Activated T-helper 1 cell treated with anti-CD3 and anti-CD28 coated beads, Interleukin-12 subunit alpha, Interleukin-12 subunit beta, Interleukin-2, Interleukin-4 antibody, amounts not matched to agents 30 ng/mL and 10 ng/mL and 1 ng/mL, durations not matched to agents 14 hours and 24 hours and 36 hours (primary cell): ENCODE measurements at regions of chr15 and their contacts with region 1.

Region 1: DNA sequence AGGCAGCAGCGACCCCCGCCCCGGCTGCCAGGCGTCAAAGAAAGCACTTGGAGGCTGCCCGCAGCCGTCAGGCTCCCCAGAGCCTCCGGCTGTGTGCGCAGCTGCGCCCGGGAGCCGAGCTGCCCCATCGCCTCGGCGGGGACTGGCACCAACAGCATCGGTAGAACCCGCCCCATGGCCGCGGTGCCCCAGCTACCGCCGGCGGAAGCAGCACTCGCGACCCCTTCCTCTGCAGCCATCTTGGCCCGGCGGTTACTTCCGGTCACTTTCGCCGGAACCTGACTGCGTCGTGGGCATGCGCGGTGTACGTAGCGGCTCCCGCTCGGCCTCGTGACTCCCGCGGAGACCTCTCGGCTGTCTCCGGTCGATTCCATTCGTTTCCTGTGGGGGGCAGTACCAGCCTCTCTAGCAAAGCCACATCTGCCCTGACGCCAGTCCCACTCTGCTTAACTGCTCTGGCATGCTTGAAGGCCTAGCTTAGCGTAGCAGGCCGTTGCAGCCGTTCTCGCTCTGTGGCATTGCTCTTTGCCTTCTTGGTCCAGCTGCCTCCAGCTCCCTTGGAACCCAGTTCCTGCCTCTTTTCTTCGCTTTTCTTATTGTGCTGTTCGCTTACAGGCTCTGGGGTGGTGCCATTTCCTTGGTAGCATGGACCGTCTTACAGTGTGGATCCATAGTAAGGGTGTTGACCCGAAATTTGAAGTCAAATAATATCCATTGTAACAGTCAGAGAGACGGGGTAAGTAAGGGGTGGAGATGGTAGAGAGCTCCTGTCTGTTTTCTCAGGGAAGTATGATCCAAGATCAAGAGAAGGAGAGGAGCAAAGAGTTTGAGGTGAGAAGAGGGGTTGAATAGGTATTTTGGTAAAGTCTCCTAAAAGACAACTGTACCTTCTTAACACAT is at the start of gene SPG11:
- DNase-seq: peak; percentile 94
- H3K4me3 Mint-ChIP-seq: peak within 1 kb of the TSS; percentile 95
- H3K27ac Mint-ChIP-seq: peak within 1 kb of the TSS; percentile 94
- H3K4me1 Mint-ChIP-seq: peaks cover 60% of the 10 kb centered on the region
- H3K27me3 Mint-ChIP-seq: no peaks in the 10 kb centered on the region
- total RNA-seq, gene SPG11: 65.2 and 70.4 TPM in 2 replicates

Region 2: GRCh38 chr15:44286814-44287452 is 376.7 kb before region 1 on chr15:
- intact Hi-C with region 1: no loop called
- DNase-seq: no peak
- H3K4me3 Mint-ChIP-seq: peak overlapping the region; percentile 92
- H3K27ac Mint-ChIP-seq: peak overlapping the region; percentile 100
- H3K4me1 Mint-ChIP-seq: peaks cover 44% of the 10 kb centered on the region
- H3K27me3 Mint-ChIP-seq: peaks cover 9% of the 10 kb centered on the region

Region 3: DNA sequence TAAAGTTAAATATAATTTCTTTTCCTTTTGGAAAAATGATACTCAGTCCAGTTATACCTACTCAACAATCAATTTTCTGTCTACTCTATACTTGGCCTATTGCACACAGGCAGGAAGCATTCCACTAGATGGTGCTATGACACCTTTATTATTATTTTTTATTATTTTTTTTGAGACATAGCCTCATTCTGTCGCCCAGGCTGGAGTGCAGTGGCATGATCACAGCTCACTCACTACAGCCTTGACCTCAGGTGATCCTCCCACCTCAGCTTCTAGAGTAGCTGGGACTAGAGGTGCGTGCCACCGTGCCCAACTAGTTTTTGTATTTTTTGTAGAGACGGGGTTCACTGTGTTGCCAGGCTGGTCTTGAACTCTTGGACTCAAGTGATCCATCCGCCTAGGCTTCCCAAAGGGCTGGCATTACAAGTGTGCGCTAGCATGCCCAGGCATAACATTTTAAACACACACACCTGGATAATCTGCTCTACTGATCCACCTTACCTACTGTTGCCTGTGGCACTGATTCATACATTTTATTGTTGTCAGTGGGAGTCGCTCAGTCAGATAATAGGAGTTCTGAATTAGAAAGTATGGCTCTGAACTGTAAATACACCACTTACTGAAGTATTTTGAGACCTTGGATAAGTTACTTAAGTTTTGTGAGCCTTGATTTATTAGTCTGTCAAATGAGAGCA is 70.5 kb before region 1 on chr15:
- intact Hi-C with region 1: loop called (anchors 2 kb)
- DNase-seq: no peak
- H3K4me3 Mint-ChIP-seq: no peak overlapping the region
- H3K27ac Mint-ChIP-seq: peak overlapping the region; percentile 55
- H3K4me1 Mint-ChIP-seq: peaks cover 34% of the 10 kb centered on the region
- H3K27me3 Mint-ChIP-seq: no peaks in the 10 kb centered on the region

Region 4: GRCh38 chr15:44647036-44647435 is 16.6 kb before region 1 on chr15:
- intact Hi-C with region 1: loop called (anchors 2 kb)
- DNase-seq: no peak
- H3K4me3 Mint-ChIP-seq: no peak overlapping the region
- H3K27ac Mint-ChIP-seq: peak overlapping the region; percentile 19
- H3K4me1 Mint-ChIP-seq: peaks cover 42% of the 10 kb centered on the region
- H3K27me3 Mint-ChIP-seq: no peaks in the 10 kb centered on the region

Region 5: DNA sequence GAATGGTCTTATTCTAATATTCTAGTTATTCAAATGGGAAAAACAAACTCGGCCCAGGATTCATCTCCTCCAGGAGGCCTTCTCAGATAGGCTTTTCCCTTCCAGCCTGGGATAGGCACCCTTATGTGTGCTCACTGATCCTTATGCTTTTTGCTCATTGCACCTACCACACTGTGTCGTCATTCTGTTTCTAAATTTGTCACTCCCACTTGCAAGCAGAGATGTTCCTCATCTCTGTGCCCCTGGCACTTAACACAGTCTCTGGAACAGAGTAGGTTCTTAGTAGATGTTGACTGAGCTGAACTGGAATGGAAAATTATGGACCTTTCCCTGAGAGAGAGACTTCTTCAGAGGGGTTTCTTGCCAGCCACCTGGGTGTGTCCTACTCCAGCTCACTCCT is 18.6 kb after region 1 on chr15:
- intact Hi-C with region 1: loop called (anchors 1 kb)
- DNase-seq: no peak
- H3K4me3 Mint-ChIP-seq: peak overlapping the region; percentile 64
- H3K27ac Mint-ChIP-seq: peak overlapping the region; percentile 89
- H3K4me1 Mint-ChIP-seq: peaks cover 68% of the 10 kb centered on the region
- H3K27me3 Mint-ChIP-seq: no peaks in the 10 kb centered on the region

Region 6: DNA sequence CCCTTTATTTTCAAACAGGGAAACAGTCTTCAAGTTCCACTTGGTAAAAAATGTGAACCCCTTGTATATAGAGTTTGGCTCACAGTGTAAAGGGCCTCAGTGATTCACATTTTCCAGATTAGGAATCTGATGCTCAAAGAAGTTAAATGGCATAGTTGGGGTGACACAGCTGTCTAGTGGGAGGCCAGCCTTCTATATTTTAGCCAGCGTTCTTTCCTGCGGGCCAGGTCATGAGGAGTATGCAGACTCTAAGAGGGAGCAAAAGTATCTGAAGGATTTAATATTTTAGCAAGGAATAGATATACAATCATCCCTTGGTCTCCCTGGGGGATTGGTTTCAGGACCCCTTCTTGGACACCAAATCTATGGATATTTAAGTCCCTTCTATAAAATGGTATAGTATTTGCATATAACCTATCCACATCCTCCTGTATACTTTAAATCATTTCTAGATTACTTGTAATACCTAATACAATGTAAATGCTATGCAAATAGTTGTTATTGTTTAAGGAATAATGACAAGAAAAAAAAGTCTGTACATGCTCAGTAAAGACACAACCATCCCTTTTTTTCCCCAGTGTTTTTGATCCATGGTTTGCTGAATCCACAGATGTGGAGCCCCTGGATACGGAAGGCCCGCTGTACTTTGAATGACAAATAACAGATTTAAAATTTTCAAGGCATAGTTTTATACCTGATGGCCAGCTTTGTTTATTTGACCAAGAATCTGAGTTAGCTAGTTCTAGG is 54.7 kb after region 1 on chr15:
- intact Hi-C with region 1: no loop called
- DNase-seq: no peak
- H3K4me3 Mint-ChIP-seq: peak overlapping the region; percentile 99
- H3K27ac Mint-ChIP-seq: peak overlapping the region; percentile 98
- H3K4me1 Mint-ChIP-seq: peaks cover 85% of the 10 kb centered on the region
- H3K27me3 Mint-ChIP-seq: no peaks in the 10 kb centered on the region

Region 7: GRCh38 chr15:44728576-44729407 is 65.1 kb after region 1 on chr15:
- intact Hi-C with region 1: loop called (anchors 1 kb)
- DNase-seq: peak; percentile 96
- H3K4me3 Mint-ChIP-seq: peak overlapping the region; percentile 100
- H3K27ac Mint-ChIP-seq: peak overlapping the region; percentile 99
- H3K4me1 Mint-ChIP-seq: peaks cover 77% of the 10 kb centered on the region
- H3K27me3 Mint-ChIP-seq: no peaks in the 10 kb centered on the region

Region 8: DNA sequence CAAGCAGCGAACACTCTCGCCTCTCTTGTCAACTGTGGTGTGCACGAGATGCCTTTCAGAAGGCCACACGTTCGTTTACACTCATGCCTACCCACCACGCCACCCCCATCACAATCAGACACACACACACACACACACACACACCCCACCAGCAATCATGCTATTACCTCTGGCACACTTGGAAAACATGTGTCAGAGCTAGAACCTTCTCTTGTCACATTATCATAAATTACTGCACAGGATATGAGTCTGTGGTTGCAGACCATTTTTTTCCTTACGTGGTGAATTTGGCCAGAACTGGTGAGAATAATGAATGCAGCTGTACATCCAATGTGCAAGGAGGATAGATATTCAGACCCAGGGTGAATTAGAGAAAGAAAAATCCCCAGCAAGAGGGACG is 125.1 kb after region 1 on chr15:
- intact Hi-C with region 1: loop called (anchors 1 kb)
- DNase-seq: no peak
- H3K4me3 Mint-ChIP-seq: no peak overlapping the region
- H3K27ac Mint-ChIP-seq: peak overlapping the region; percentile 71
- H3K4me1 Mint-ChIP-seq: peaks cover 30% of the 10 kb centered on the region
- H3K27me3 Mint-ChIP-seq: no peaks in the 10 kb centered on the region

Region 9: GRCh38 chr15:44812029-44812517 is 148.4 kb after region 1 on chr15:
- intact Hi-C with region 1: no loop called
- DNase-seq: no peak
- H3K4me3 Mint-ChIP-seq: no peak overlapping the region
- H3K27ac Mint-ChIP-seq: no peak overlapping the region
- H3K4me1 Mint-ChIP-seq: no peaks in the 10 kb centered on the region
- H3K27me3 Mint-ChIP-seq: peaks cover 31% of the 10 kb centered on the region